Activated T-helper 2 cell treated with anti-CD3 and anti-CD28 coated beads, Interferon-gamma antibody, Interleukin-2, Interleukin-4, amounts not matched to agents 10 μg/mL and 5 μg/mL and 100 μg/mL, durations not matched to agents 14 hours and 24 hours and 36 hours (primary cell): ENCODE measurements at regions of chr14 and their contacts with region 1.

Region 1: GRCh38 chr14:72049455-72049854 is 117.2 kb downstream of the RGS6 start:
- DNase-seq: peak; percentile 48
- H3K4me3 Mint-ChIP-seq: no peak overlapping the region
- H3K27ac Mint-ChIP-seq: peak overlapping the region; percentile 72
- H3K4me1 Mint-ChIP-seq: peaks cover 34% of the 10 kb centered on the region
- H3K27me3 Mint-ChIP-seq: peaks cover 15% of the 10 kb centered on the region

Region 2: DNA sequence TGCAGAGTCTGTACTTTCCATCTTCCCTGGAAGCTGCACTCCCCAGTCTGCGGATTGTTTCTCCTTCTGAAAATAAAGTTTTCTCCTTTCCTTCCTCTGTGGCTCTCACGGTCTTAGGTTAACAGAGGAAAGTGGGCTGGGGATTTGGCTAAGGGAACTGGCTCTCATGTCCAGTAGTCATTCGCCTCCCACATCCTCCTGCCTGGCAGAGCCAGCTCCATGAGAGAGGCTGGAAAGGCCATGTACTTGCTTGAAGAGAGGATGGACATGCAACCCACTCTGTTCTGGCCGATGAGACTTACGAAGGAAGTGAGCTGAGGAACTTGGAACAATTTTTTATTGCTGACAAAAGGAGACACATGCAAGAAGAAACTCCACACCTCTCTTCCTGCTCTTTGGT is 136.1 kb before region 1 on chr14:
- intact Hi-C with region 1: no loop called
- DNase-seq: no peak
- H3K4me3 Mint-ChIP-seq: no peak overlapping the region
- H3K27ac Mint-ChIP-seq: no peak overlapping the region
- H3K4me1 Mint-ChIP-seq: no peaks in the 10 kb centered on the region
- H3K27me3 Mint-ChIP-seq: peaks cover 22% of the 10 kb centered on the region

Region 3: DNA sequence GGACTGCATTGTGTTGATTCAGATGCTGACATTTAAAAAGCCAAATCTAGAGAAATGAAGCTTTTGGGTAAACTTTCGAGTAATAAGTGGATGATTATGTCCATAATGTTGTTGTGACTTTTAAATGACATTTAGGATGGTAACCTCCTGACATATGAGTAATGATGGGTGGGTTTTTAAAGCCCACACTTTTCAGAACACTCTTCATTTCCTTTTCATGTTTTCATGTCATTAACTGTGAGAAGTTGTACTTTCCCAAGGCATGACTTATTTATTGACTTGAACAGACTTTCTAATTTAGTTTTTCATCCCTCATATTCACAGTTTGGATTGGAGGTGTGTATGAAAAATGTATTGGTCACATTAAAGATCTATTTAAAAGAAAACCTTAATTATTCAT is 81.8 kb before region 1 on chr14:
- intact Hi-C with region 1: loop called (anchors 1 kb)
- DNase-seq: no peak
- H3K4me3 Mint-ChIP-seq: peak overlapping the region; percentile 3
- H3K27ac Mint-ChIP-seq: peak overlapping the region; percentile 88
- H3K4me1 Mint-ChIP-seq: peaks cover 26% of the 10 kb centered on the region
- H3K27me3 Mint-ChIP-seq: peaks cover 14% of the 10 kb centered on the region

Region 4: DNA sequence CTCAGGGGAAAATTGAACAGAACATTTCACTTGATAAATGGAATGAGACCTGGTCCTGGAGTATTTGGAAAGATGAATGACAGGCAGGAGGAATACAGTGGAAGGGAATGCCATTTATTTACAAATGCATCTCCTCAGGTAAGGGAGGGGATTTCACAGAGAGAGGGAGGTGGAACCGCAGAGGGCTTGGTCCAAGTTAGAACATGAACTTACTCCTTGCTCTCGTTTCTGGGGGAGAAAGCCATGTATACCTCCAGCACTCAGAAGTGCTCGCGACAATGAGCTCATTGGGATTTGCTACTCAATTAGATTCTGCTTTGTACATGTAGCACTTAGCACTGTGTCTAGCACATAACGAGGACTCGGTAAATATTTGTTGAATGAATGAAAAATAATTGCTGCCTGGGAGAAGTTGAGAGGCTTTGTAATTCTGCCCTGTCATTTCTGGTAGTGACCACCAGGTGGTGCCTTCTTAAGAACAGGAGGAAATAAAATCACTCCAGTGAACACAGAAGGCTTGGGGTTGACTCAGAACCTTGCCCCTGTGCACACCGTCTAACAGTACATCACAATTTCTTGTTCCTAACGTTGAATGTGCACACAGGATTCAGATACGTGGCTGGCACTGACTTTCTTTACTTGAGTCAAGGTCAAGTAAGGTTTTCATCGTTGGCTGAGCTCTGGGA is 25.6 kb before region 1 on chr14:
- intact Hi-C with region 1: loop called (anchors 1 kb)
- DNase-seq: peak; percentile 40
- H3K4me3 Mint-ChIP-seq: no peak overlapping the region
- H3K27ac Mint-ChIP-seq: no peak overlapping the region
- H3K4me1 Mint-ChIP-seq: peaks cover 10% of the 10 kb centered on the region
- H3K27me3 Mint-ChIP-seq: peaks cover 39% of the 10 kb centered on the region

Region 5: DNA sequence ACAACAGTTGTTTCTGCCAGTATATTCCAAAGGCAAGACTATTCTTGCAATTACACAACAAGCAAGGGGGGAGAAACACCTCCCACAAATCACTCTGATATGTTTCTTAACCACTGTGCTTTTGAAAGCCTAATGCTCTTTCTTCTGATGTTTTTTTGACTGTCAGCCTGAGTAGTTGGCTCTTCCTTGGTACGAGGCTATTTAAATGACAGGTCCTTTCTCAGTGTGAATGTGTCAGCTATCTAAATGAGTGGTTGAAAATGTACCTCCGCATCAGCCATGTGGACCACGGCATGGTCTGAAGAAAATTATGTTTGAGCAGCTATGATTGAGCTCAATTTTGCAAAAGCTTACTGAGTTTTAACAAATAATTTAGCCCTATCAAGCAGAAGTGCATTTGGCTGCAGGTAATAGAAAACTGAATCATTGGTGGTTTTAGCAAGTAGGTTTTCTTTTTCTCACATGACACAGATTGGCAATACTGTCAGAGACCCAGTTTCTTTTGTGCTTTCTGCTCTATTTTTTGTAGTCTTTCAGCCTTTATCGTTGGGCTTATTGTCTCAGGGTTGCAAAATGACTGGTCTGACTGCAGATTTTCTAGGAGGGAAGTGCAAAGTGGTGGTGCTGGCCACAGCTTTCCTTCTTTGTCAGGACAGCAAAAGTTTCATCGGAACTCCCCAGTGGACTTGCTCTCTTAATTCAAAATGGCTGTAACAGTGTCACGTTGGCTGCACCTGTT is 45.6 kb after region 1 on chr14:
- intact Hi-C with region 1: loop called (anchors 2 kb)
- DNase-seq: no peak
- H3K4me3 Mint-ChIP-seq: no peak overlapping the region
- H3K27ac Mint-ChIP-seq: no peak overlapping the region
- H3K4me1 Mint-ChIP-seq: peaks cover 17% of the 10 kb centered on the region
- H3K27me3 Mint-ChIP-seq: peaks cover 13% of the 10 kb centered on the region

Region 6: DNA sequence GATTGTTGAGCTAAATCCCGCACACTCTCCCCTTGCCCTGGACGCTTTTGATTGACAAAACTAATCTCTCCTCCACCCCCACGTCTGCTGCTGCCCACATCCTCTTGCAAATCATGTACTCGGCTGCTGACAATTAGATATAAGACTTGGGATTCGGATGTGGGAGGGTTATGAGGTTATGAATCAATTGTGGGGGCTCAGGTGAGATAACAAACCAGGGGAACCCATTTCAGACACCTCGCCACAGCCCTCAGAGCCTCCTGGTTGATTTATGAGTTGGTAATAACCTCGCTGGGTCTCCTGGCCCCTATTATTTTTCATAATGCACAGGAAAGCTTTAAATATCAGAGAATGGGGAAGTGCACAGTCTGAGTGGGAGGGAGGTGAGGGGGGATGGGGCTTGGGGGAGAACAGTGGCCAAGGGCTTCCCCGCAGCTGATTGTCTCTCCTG is 394.6 kb after region 1 on chr14:
- intact Hi-C with region 1: loop called (anchors 10 kb)
- DNase-seq: peak; percentile 31
- H3K4me3 Mint-ChIP-seq: no peak overlapping the region
- H3K27ac Mint-ChIP-seq: peak overlapping the region; percentile 23
- H3K4me1 Mint-ChIP-seq: peaks cover 62% of the 10 kb centered on the region
- H3K27me3 Mint-ChIP-seq: no peaks in the 10 kb centered on the region